K562 (cell line): ENCODE measurements at regions of chr9 and their contacts with region 1.

Region 1: GRCh38 chr9:129737479-129738274 is 15.2 kb downstream of the PTGES start:
- DNase-seq: peak; percentile 94 to 98 (median 96)
- ATAC-seq: peak; percentile 95
- H3K4me3 ChIP-seq: peak overlapping the region; percentile 53
- H3K27ac ChIP-seq: peak overlapping the region; percentile 81
- H3K4me1 ChIP-seq: peaks cover 6 to 42% of the 10 kb centered on the region in 2 experiments; a peak in 4 of 5 replicates
- H3K27me3 ChIP-seq: peaks cover 10 to 14% of the 10 kb centered on the region in 2 experiments
- CTCF ChIP-seq: peak; percentile 95 to 99 (median 98)
- EP300 ChIP-seq: peak; percentile 25; the same call in 1 of the 2 replicates
- POLR2A ChIP-seq: peak; percentile 81
- RAD21 ChIP-seq: peak; percentile 99 to 100

Region 2: GRCh38 chr9:129166623-129167557 is 570.8 kb before region 1 on chr9:
- CTCF ChIA-PET with region 1: no interaction called
- POLR2A ChIA-PET with region 1: no interaction called
- in situ Hi-C with region 1: no loop called
- intact Hi-C with region 1: no loop called
- DNase-seq: peak; percentile 82 to 92 (median 90)
- ATAC-seq: peak; percentile 87
- H3K4me3 ChIP-seq: peak overlapping the region; percentile 34
- H3K27ac ChIP-seq: peak overlapping the region; percentile 50
- H3K4me1 ChIP-seq: peaks cover 29 to 33% of the 10 kb centered on the region in 2 experiments
- H3K27me3 ChIP-seq: peaks cover 0 to 1% of the 10 kb centered on the region in 2 experiments; a peak in 1 of 5 replicates
- CTCF ChIP-seq: no peak
- EP300 ChIP-seq: no peak
- POLR2A ChIP-seq: no peak
- RAD21 ChIP-seq: no peak

Region 3: GRCh38 chr9:129413537-129414376 is 323.9 kb before region 1 on chr9:
- CTCF ChIA-PET with region 1: no interaction called
- POLR2A ChIA-PET with region 1: no interaction called
- in situ Hi-C with region 1: no loop called
- intact Hi-C with region 1: no loop called
- DNase-seq: peak; percentile 96 to 98 (median 96)
- ATAC-seq: peak; percentile 87
- H3K4me3 ChIP-seq: peak overlapping the region; percentile 53
- H3K27ac ChIP-seq: peak overlapping the region; percentile 99
- H3K4me1 ChIP-seq: peaks cover 45 to 55% of the 10 kb centered on the region in 2 experiments
- H3K27me3 ChIP-seq: no peaks in the 10 kb centered on the region
- CTCF ChIP-seq: no peak
- EP300 ChIP-seq: peak; percentile 57; the same call in 1 of the 2 replicates
- POLR2A ChIP-seq: peak; percentile 72
- RAD21 ChIP-seq: no peak

Region 4: GRCh38 chr9:129726322-129727160 is 11.1 kb before region 1 on chr9:
- CTCF ChIA-PET with region 1: interaction called, 6 read pairs
- POLR2A ChIA-PET with region 1: interaction called, 23 read pairs
- in situ Hi-C with region 1: no loop called
- intact Hi-C with region 1: no loop called
- DNase-seq: peak; percentile 88 to 98 (median 96)
- ATAC-seq: peak; percentile 97
- H3K4me3 ChIP-seq: no peak overlapping the region
- H3K27ac ChIP-seq: no peak overlapping the region
- H3K4me1 ChIP-seq: peaks cover 0 to 20% of the 10 kb centered on the region in 2 experiments; a peak in 2 of 5 replicates
- H3K27me3 ChIP-seq: peaks cover 15 to 37% of the 10 kb centered on the region in 2 experiments
- CTCF ChIP-seq: peak; percentile 97 to 100 (median 98)
- EP300 ChIP-seq: no peak
- POLR2A ChIP-seq: no peak
- RAD21 ChIP-seq: peak; percentile 97 to 99

Region 5: DNA sequence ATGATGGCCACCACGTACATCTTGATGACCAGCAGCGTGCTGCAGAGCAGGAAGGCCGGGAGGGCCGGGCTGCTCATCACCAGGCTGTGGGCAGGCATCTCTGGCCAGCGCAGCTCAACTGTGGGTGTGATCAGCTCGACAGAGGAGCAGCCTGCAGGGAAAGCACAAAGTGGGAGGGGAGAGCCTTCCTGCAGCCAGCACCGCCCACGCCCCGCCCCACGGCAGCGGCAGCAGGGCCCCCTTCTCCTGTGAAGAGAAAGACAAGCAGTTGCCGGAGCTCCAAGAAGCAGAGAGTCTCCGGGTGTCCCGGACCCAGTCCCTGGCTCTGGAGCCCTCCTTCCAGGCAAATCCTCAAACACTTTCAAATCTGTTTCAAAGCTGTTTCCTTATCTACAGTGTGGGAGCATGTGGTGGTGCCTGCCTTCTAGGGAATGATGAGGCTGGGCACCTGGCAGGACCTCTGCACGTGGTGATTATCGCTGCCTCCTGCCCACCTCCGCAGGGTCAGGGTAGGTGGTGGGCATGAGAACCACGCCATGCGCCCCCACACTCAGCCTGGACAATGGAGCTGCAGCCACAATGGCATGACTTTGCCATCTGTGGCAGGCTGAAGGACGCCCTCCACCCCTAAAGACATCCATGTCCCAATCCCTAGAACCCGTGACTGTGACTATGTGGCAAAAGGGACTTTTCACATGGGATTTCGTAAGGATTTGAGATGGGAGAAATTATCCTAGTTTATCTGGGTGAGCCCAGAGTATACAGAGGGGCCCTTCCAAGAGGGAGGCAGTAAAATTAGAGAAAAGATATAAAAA is 15.4 kb after region 1 on chr9 and contains the start of gene PTGES:
- CTCF ChIA-PET with region 1: no interaction called
- POLR2A ChIA-PET with region 1: interaction called, 12 read pairs
- in situ Hi-C with region 1: no loop called
- intact Hi-C with region 1: no loop called
- DNase-seq: peak; percentile 81 to 91 (median 86)
- ATAC-seq: peak; percentile 92
- H3K4me3 ChIP-seq: no peak within 1 kb of the TSS
- H3K27ac ChIP-seq: no peak within 1 kb of the TSS
- H3K4me1 ChIP-seq: peaks cover 12 to 19% of the 10 kb centered on the region in 2 experiments; a peak in 4 of 5 replicates
- H3K27me3 ChIP-seq: peaks cover 37 to 72% of the 10 kb centered on the region in 2 experiments
- CTCF ChIP-seq: no peak
- EP300 ChIP-seq: no peak
- POLR2A ChIP-seq: no peak
- RAD21 ChIP-seq: no peak
- polyA plus RNA-seq, gene PTGES: not detected

Region 6: GRCh38 chr9:129763264-129763926 is 25.7 kb after region 1 on chr9:
- CTCF ChIA-PET with region 1: no interaction called
- POLR2A ChIA-PET with region 1: interaction called, 8 read pairs
- in situ Hi-C with region 1: no loop called
- intact Hi-C with region 1: loop called (anchors 1 kb)
- DNase-seq: no peak
- ATAC-seq: no peak
- H3K4me3 ChIP-seq: no peak overlapping the region
- H3K27ac ChIP-seq: no peak overlapping the region
- H3K4me1 ChIP-seq: peaks cover 18 to 22% of the 10 kb centered on the region in 2 experiments; a peak in 4 of 5 replicates
- H3K27me3 ChIP-seq: no peaks in the 10 kb centered on the region
- CTCF ChIP-seq: no peak
- EP300 ChIP-seq: no peak
- POLR2A ChIP-seq: no peak
- RAD21 ChIP-seq: no peak

Region 7: GRCh38 chr9:129783516-129784361 is 46.1 kb after region 1 on chr9:
- CTCF ChIA-PET with region 1: interaction called, 112 read pairs
- POLR2A ChIA-PET with region 1: interaction called, 8 read pairs
- in situ Hi-C with region 1: loop called (anchors 5 kb)
- intact Hi-C with region 1: loop called (anchors 1 kb)
- DNase-seq: peak; percentile 89 to 97 (median 96)
- ATAC-seq: peak; percentile 97
- H3K4me3 ChIP-seq: no peak overlapping the region
- H3K27ac ChIP-seq: no peak overlapping the region
- H3K4me1 ChIP-seq: peaks cover 8 to 15% of the 10 kb centered on the region in 2 experiments; a peak in 3 of 5 replicates
- H3K27me3 ChIP-seq: no peaks in the 10 kb centered on the region; a peak in 1 of 5 replicates
- CTCF ChIP-seq: peak; percentile 97 to 99 (median 99)
- EP300 ChIP-seq: no peak; the same call in 1 of the 2 replicates
- POLR2A ChIP-seq: no peak
- RAD21 ChIP-seq: peak; percentile 100

Region 8: GRCh38 chr9:129796029-129796910 is 58.6 kb after region 1 on chr9:
- CTCF ChIA-PET with region 1: no interaction called
- POLR2A ChIA-PET with region 1: interaction called, 3 read pairs
- in situ Hi-C with region 1: no loop called
- intact Hi-C with region 1: loop called (anchors 2 kb)
- DNase-seq: peak in 1 of 4 experiments; percentile 9
- ATAC-seq: no peak
- H3K4me3 ChIP-seq: no peak overlapping the region
- H3K27ac ChIP-seq: no peak overlapping the region
- H3K4me1 ChIP-seq: no peaks in the 10 kb centered on the region
- H3K27me3 ChIP-seq: peaks cover 35 to 43% of the 10 kb centered on the region in 2 experiments
- CTCF ChIP-seq: no peak
- EP300 ChIP-seq: no peak
- POLR2A ChIP-seq: no peak
- RAD21 ChIP-seq: no peak

Region 9: GRCh38 chr9:129900263-129901027 is 162.8 kb after region 1 on chr9:
- CTCF ChIA-PET with region 1: no interaction called
- POLR2A ChIA-PET with region 1: no interaction called
- in situ Hi-C with region 1: no loop called
- intact Hi-C with region 1: no loop called
- DNase-seq: peak in 1 of 4 experiments; percentile 49
- ATAC-seq: peak; percentile 60
- H3K4me3 ChIP-seq: no peak overlapping the region
- H3K27ac ChIP-seq: no peak overlapping the region
- H3K4me1 ChIP-seq: peaks cover 5 to 6% of the 10 kb centered on the region in 2 experiments; a peak in 4 of 5 replicates
- H3K27me3 ChIP-seq: no peaks in the 10 kb centered on the region
- CTCF ChIP-seq: peak; percentile 24 to 51 (median 40); a peak in 5 of 6 replicates
- EP300 ChIP-seq: no peak
- POLR2A ChIP-seq: no peak
- RAD21 ChIP-seq: peak in 1 of 2 experiments; percentile 66; a peak in 2 of 4 replicates

Region 10: DNA sequence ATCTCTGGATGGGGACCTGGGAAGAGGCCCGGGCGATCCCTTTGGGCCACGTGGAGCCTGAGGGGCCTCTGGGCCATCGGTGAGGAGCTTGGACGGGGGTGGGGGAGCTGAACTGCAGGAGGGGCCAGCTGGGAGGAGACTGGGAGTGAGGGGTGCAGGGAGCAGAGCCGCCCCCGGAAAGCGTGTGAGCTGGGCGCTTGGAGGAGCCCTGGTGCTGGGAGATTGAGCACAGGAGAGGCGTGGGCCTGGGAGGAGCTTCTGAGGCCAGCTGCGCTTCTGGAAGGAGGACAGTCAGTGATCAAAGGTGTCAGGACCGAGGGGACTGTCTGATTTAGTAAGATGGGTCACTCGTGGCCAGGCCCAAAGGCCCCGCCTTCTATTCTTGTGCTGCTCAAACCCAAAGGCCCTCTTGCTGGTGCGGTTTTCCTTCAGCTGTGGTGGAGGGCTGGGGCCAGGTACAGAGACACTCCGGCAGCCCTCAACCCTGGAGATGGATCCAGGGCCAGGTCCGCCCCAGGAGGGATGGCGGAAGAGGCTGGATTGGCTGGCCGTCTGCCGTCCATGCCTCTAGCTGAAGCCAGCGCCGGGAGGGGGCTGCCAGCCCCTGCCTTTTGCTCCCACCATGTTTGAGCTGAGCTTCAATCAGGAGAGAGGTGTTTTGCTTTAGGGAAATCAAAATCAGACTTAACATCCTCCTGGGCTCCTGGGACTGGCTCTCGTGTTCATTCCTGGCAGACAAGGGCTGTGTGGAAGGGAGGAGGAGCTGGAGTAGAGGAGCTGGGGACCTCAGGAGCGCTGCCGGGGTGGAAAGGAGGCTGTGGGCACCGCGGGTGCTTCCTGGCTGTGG is 456.1 kb after region 1 on chr9:
- CTCF ChIA-PET with region 1: no interaction called
- POLR2A ChIA-PET with region 1: no interaction called
- in situ Hi-C with region 1: no loop called
- intact Hi-C with region 1: no loop called
- DNase-seq: peak in 2 of 4 experiments; percentile 35 to 40
- ATAC-seq: peak; percentile 59
- H3K4me3 ChIP-seq: no peak overlapping the region
- H3K27ac ChIP-seq: no peak overlapping the region
- H3K4me1 ChIP-seq: peaks cover 20 to 77% of the 10 kb centered on the region in 2 experiments
- H3K27me3 ChIP-seq: no peaks in the 10 kb centered on the region
- CTCF ChIP-seq: no peak
- EP300 ChIP-seq: no peak
- POLR2A ChIP-seq: no peak
- RAD21 ChIP-seq: no peak